ENCODE measurements at regions of chr9 and their contacts with region 1.

Region 1: DNA sequence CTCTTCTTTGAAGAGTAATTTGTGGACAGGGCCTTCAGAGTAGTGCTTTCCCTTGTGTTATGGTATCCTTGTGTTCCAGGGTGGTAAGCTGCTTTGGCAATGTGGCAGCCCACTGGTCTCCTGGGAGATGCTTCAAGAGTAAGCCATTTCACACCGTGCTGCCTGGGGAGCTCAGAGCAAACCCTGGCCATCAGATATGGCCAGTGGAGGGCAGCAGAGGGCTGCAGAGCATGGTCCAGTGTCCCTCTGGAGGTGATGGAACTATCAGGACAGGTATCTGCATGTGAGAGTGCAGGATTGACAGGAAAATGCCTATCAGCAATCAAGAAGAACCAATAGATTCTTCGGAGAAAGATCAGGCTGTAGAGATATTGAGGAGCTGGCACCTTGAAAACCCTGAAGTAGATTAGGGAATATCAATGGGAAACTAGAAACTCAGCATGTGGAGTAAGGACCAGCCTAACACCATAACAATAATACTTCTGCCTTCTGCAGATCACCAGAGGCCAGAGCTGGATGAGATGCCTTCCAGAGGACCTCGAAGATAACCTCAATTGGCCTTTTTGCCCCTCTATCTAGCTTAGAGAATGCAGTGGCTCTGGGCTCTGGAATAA is 90.8 kb downstream of the PLPPR1 start:
- DNase-seq: peak; percentile 64
- H3K4me3 ChIP-seq: no peak overlapping the region
- H3K27ac ChIP-seq: peak overlapping the region; percentile 12
- H3K4me1 ChIP-seq: peaks cover 40% of the 10 kb centered on the region
- H3K27me3 ChIP-seq: no peaks in the 10 kb centered on the region
- CTCF ChIP-seq: peak; percentile 85 to 91
- POLR2A ChIP-seq: no peak

Region 2: DNA sequence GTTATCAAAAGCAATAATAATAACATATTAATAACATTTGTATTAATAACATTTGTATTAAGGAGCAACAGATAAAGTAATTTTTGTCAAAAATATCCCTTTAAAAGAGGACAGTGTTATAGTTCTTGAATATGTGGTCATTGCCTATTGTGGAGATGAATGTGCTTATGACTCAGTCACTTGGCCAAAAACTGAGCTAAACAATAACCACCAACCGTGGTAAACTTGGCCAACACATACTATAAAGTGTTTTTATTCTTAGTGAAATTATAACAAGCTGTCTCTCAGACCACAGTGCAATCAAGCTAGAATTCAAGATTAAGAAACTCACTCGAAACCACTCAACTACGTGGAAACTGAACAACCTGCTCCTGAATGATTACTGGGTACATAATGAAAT is 250.0 kb before region 1 on chr9:
- CTCF ChIA-PET with region 1: no interaction called
- POLR2A ChIA-PET with region 1: no interaction called
- dilution Hi-C with region 1: no loop called
- intact Hi-C with region 1: no loop called
- DNase-seq: no peak
- H3K4me3 ChIP-seq: no peak overlapping the region
- H3K27ac ChIP-seq: no peak overlapping the region
- H3K4me1 ChIP-seq: no peaks in the 10 kb centered on the region
- H3K27me3 ChIP-seq: no peaks in the 10 kb centered on the region
- CTCF ChIP-seq: no peak
- POLR2A ChIP-seq: no peak

Region 3: DNA sequence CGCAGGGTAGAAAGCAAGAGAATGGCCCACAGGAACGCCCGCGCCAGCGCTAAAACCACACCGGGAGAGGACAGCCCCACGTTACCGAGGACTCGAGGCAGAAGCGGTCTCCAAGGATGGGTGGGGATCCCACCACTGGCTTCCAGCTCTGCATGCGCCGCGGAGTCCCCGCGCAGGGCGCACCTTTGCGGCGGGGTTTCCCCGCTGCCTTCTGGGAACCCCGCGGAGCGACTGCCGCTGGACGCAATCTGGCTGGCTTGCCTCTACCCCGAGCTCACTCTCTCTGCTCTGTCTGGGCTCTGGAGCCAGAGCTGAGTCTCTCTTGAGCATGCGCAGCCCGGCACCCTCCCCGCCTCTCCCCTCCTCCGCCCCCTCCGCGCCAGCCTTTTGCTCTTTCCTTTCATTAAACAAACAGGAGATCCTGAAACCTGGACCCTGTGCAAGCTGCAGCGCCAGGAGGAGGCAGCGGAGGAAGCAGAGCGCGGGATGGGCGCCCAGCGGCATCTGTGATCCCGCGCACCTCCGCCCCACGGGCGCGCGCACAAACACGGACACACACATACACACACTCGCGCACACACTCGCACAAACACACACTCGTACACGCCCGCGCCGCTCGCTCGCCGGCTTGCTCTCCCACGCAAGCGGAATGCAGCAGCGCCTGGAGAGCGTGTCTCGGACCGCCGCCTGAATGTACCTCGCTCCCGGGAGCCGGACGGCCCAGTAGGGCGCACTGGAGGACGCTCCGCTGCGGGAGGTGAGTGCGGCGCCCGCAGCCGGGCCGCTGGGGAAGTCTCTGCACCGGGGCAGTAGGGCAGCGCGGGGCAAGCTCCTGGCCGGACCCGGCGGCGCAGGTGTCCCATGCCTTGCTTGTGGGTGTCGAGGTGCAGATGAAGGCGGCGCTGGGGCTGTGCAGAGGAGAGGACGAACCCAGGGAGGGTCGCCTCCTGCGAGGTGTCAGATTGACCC is 90.7 kb before region 1 on chr9 and contains the start of gene PLPPR1:
- CTCF ChIA-PET with region 1: interaction called, 10 read pairs
- POLR2A ChIA-PET with region 1: no interaction called
- dilution Hi-C with region 1: no loop called
- intact Hi-C with region 1: loop called (anchors 2 kb)
- DNase-seq: peak; percentile 78
- H3K4me3 ChIP-seq: peak within 1 kb of the TSS; percentile 24 to 56 (median 43)
- H3K27ac ChIP-seq: no peak within 1 kb of the TSS
- H3K4me1 ChIP-seq: no peaks in the 10 kb centered on the region
- H3K27me3 ChIP-seq: peaks cover 26 to 54% of the 10 kb centered on the region in 2 experiments
- CTCF ChIP-seq: no peak
- POLR2A ChIP-seq: no peak
- total RNA-seq, gene PLPPR1: 0.18 TPM in 1 of 2 replicates, not detected in the other

Region 4: DNA sequence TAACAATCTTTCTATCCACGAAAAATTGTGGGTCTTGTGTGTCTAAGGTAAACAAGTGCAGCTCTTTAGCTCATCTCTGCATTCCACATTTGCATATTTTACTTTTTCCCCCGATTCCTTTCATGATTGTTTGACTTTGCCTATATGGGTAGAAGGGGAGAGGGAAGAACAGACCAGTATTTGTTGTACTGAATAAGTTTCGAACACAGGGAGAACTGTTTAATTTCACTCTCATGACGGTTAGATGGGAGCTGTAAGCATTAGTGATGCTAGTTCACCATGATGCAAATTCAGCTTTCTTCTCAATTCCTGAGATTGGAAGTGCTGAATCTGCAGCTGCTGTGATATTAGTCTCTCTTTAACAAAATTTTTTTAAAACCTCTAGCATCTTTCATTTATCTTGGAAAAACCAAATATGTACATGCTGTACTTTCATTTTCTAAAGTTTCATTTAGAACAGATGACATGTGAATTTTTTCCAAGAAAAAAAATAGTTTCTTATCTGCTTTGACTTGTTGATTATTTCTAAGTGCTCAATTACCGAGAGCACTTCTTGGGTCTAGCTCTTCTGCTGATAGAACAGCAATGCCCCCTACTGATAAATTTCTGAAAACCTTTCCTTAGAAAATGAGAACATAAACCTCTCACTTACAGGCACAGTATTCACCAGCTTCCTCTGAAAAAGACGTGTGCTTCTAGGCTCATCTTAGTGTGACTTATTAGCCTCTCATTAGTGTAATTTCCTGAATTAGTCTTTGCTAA is 116.0 kb after region 1 on chr9:
- CTCF ChIA-PET with region 1: interaction called, 59 read pairs
- POLR2A ChIA-PET with region 1: no interaction called
- dilution Hi-C with region 1: no loop called
- intact Hi-C with region 1: loop called (anchors 1 kb)
- DNase-seq: peak; percentile 58
- H3K4me3 ChIP-seq: no peak overlapping the region
- H3K27ac ChIP-seq: no peak overlapping the region
- H3K4me1 ChIP-seq: no peaks in the 10 kb centered on the region
- H3K27me3 ChIP-seq: no peaks in the 10 kb centered on the region
- CTCF ChIP-seq: peak; percentile 14 to 38
- POLR2A ChIP-seq: no peak

Region 5: DNA sequence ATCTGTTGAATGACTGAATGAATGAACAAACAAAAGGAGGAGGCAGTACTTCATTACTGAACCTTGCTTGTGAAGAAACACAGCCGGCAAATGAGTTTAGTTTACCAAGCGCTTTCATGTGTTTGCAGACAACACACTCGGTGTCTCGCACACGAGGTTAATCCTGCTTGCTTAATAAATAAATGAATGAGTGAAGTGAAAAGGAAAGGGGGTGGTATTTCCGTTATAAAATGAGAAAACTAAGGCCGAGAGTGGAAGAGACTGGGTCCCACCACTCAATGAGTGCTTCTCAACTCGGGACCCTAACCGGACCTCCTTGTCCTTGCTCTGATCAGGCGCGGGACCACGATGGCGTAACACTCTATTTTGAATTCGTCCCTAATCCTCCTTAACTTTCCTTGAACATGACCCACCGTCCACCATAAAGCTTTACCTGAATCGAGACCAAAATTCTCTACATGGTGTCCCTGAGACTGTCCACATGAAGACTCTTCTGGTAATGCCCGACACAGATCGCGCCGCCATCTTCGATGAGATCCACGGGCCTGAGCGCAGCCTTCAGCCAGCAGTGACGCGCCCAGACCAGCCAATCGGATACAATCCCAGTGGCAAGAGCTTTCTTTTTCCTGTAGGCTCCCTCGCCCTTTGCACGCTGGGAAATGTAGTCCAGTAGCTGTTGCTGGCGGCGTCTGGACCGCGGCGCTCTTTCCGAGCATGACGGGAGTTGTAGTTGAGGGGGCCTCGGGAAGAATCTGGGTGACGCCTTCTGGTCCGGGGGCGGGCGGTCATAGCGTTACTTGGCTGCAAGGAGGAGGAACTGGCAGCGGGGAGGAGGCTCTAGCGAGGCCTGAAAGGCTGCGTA is 279.0 kb after region 1 on chr9 and contains the starts of genes MRPL50 and ZNF189:
- CTCF ChIA-PET with region 1: no interaction called
- POLR2A ChIA-PET with region 1: no interaction called
- dilution Hi-C with region 1: no loop called
- intact Hi-C with region 1: loop called (anchors 2 kb)
- DNase-seq: peak; percentile 99
- H3K4me3 ChIP-seq: peak within 1 kb of the TSS; percentile 66 to 97 (median 92)
- H3K27ac ChIP-seq: peak within 1 kb of the TSS; percentile 87
- H3K4me1 ChIP-seq: peaks cover 26% of the 10 kb centered on the region
- H3K27me3 ChIP-seq: no peaks in the 10 kb centered on the region
- CTCF ChIP-seq: no peak
- POLR2A ChIP-seq: peak; percentile 78
- total RNA-seq, gene MRPL50: 8.6 and 9.7 TPM in 2 replicates
- total RNA-seq, gene ZNF189: 14.4 and 14.6 TPM in 2 replicates